Mammary epithelial cell (primary cell): ENCODE measurements at regions of chr1 and their contacts with region 1.

Region 1: GRCh38 chr1:108877348-108878159 is 769 bp downstream of the GPSM2 start:
- DNase-seq: peak; percentile 40
- H3K4me3 ChIP-seq: peak overlapping the region; percentile 74 to 97 (median 94)
- H3K27ac ChIP-seq: peak overlapping the region; percentile 81
- H3K4me1 ChIP-seq: peaks cover 31% of the 10 kb centered on the region
- H3K27me3 ChIP-seq: no peaks in the 10 kb centered on the region
- CTCF ChIP-seq: no peak

Region 2: DNA sequence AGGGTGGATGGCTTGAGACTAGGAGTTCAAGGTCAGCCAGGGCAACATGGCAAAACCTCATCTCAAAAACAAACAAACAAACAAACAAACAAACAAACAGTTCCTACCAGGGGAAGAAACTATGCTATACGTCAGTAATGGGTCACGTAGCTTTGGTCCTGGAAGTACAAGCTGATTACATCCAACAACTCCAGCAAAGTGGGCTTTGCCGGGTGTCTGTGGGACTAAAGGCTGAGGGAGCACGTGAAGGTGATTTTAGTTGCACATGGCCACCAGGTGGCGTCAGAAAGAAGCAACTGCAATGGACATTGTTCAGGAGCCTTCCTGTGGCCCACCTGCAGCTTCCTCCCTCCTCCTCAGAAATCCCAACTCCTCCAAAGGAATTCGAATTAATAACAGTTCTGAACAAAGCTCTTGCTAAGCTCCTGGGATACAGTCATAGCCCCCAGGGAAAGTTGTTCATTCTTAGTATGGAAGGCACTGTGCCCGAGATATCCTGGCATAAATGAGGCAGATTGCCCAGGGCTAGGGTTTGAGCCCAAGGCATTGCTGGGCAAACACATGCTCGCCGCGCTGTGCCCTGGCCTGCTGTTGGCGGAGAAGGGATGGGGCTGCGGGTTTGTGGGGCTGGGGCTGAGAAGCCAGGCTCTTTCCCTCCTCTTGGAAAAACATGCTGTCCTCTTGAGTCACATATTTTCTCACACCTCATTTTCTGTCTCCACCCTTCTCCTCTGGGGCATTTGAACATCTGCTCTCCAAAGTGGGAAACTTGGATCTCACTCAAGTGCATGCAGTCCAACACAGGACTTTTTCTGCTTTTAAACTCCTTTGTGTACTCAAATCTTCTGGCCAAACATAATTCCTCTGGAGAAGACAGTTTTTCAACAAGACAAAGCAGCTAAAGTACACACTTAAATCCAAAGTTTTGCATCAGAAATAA is 49.3 kb before region 1 on chr1:
- CTCF ChIA-PET with region 1: no interaction called
- dilution Hi-C with region 1: no loop called
- in situ Hi-C with region 1: no loop called
- intact Hi-C with region 1: loop called (anchors 1 kb)
- DNase-seq: peak; percentile 96
- H3K4me3 ChIP-seq: peak overlapping the region in 1 of 3 experiments; percentile 1
- H3K27ac ChIP-seq: peak overlapping the region; percentile 90
- H3K4me1 ChIP-seq: peaks cover 34% of the 10 kb centered on the region
- H3K27me3 ChIP-seq: no peaks in the 10 kb centered on the region
- CTCF ChIP-seq: peak; percentile 62 to 80

Region 3: GRCh38 chr1:108847494-108847893 is 30.1 kb before region 1 on chr1:
- CTCF ChIA-PET with region 1: no interaction called
- dilution Hi-C with region 1: no loop called
- in situ Hi-C with region 1: no loop called
- intact Hi-C with region 1: loop called (anchors 2 kb)
- DNase-seq: no peak
- H3K4me3 ChIP-seq: no peak overlapping the region
- H3K27ac ChIP-seq: no peak overlapping the region
- H3K4me1 ChIP-seq: peaks cover 16% of the 10 kb centered on the region
- H3K27me3 ChIP-seq: no peaks in the 10 kb centered on the region
- CTCF ChIP-seq: no peak

Region 4: DNA sequence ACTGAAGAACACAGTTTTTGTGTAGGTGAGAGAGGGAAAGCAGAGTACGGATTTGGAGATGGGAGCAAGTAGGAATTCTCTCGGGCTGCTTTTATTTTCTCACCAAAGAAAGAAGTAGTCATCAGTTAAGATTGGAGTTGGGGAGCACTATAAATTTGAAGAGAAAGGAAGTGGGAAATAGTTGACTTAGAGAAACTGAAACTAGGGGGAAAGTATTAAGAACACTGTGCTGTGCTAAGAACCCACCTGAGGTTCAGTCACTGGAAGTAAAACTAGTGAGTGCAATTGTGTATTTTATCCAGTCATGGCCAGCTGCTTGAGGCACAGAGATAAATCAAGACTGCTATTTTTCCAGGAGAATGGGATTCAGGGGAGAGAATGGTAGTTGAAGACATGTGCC is 48.4 kb after region 1 on chr1:
- CTCF ChIA-PET with region 1: no interaction called
- dilution Hi-C with region 1: no loop called
- in situ Hi-C with region 1: no loop called
- intact Hi-C with region 1: no loop called
- DNase-seq: no peak
- H3K4me3 ChIP-seq: no peak overlapping the region
- H3K27ac ChIP-seq: no peak overlapping the region
- H3K4me1 ChIP-seq: no peaks in the 10 kb centered on the region
- H3K27me3 ChIP-seq: no peaks in the 10 kb centered on the region
- CTCF ChIP-seq: no peak